ENCODE measurements at regions of chr12 and their contacts with region 1.

Region 1: DNA sequence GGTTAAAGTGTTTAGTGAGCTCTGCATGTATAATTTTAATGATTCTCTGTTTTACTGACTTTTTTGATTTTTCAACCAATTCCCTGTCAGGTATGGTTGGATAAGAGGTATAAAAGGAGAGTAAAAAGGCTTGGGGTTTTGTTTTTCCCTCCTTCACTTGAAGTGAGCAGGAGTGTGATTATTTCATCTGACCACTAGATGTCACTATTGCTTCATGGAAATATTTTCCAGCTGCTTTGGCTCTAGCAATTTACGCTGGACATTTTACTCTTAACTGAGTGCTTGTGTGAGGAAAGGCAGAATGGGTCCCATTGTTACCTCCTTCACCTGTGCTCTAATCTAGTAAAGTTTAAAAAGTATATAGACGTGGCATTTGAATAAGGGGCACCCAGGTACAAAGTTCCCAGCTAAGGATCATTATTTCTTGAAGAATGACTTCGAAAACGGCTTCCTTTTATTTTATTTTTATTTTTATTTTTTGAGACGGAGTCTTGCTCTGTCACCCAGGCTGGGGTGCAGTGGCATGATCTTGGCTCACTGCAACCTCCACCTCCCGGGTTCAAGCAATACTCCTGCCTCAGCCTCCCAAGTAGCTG is 66.5 kb downstream of the TBC1D30 start:
- DNase-seq: peak; percentile 71
- H3K4me3 Mint-ChIP-seq: no peak overlapping the region
- H3K27ac Mint-ChIP-seq: no peak overlapping the region
- H3K4me1 Mint-ChIP-seq: peaks cover 6% of the 10 kb centered on the region
- H3K27me3 Mint-ChIP-seq: peaks cover 15% of the 10 kb centered on the region
- CTCF ChIP-seq: peak; percentile 58

Region 2: GRCh38 chr12:64801381-64801780 is 89.6 kb before region 1 on chr12:
- CTCF ChIA-PET with region 1: interaction called, 37 read pairs
- POLR2A ChIA-PET with region 1: no interaction called
- intact Hi-C with region 1: loop called (anchors 1 kb)
- DNase-seq: peak; percentile 45
- H3K4me3 Mint-ChIP-seq: no peak overlapping the region
- H3K27ac Mint-ChIP-seq: no peak overlapping the region
- H3K4me1 Mint-ChIP-seq: peaks cover 13% of the 10 kb centered on the region
- H3K27me3 Mint-ChIP-seq: no peaks in the 10 kb centered on the region
- CTCF ChIP-seq: no peak

Region 3: DNA sequence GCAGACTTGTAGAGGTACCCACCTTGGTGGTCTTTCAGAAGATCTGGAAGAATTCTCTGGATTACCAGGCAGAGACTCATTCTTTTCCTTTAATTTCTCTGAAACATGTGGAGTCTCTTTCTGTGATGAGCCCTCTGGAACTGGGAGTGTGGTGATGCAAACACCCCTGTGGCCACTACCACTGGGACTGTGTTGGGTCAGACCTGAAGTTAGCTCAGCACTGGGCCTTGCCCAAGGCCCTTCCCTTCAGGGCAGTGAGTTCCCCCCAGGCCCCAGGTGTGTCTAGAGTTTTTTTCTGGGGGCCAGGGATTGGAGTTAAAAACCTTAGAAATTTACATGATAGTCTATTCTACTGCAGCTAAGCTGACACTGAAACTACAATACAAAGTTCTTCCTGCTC is 34.5 kb before region 1 on chr12:
- CTCF ChIA-PET with region 1: no interaction called
- POLR2A ChIA-PET with region 1: no interaction called
- intact Hi-C with region 1: no loop called
- DNase-seq: no peak
- H3K4me3 Mint-ChIP-seq: no peak overlapping the region
- H3K27ac Mint-ChIP-seq: no peak overlapping the region
- H3K4me1 Mint-ChIP-seq: no peaks in the 10 kb centered on the region
- H3K27me3 Mint-ChIP-seq: no peaks in the 10 kb centered on the region
- CTCF ChIP-seq: no peak

Region 4: DNA sequence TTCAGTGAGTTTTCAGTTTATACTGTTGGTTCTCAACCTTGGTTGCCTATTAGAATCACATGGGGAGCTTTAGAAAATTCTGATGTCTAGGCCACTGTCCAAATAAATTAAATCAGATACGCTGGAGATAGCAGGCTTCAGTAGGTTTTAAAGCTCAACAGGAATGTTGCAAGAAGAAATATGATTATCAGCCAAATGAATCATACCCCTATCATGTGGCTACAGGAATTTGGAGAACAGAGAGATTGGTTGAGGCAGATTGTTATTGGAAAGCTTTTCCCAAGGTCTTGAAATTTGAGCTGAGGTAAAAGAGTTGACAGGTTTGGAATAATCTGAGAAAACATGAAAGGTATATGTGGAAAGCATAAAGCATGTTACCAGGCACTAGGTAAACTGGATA is 104.9 kb after region 1 on chr12:
- CTCF ChIA-PET with region 1: interaction called, 10 read pairs
- POLR2A ChIA-PET with region 1: no interaction called
- intact Hi-C with region 1: no loop called
- DNase-seq: peak; percentile 53
- H3K4me3 Mint-ChIP-seq: no peak overlapping the region
- H3K27ac Mint-ChIP-seq: no peak overlapping the region
- H3K4me1 Mint-ChIP-seq: peaks cover 7% of the 10 kb centered on the region
- H3K27me3 Mint-ChIP-seq: peaks cover 10% of the 10 kb centered on the region
- CTCF ChIP-seq: no peak

Region 5: GRCh38 chr12:65106948-65107347 is 216.0 kb after region 1 on chr12:
- CTCF ChIA-PET with region 1: interaction called, 131 read pairs
- POLR2A ChIA-PET with region 1: interaction called, 3 read pairs
- intact Hi-C with region 1: loop called (anchors 1 kb)
- DNase-seq: peak; percentile 9
- H3K4me3 Mint-ChIP-seq: no peak overlapping the region
- H3K27ac Mint-ChIP-seq: no peak overlapping the region
- H3K4me1 Mint-ChIP-seq: no peaks in the 10 kb centered on the region
- H3K27me3 Mint-ChIP-seq: peaks cover 20% of the 10 kb centered on the region
- CTCF ChIP-seq: no peak

Region 6: DNA sequence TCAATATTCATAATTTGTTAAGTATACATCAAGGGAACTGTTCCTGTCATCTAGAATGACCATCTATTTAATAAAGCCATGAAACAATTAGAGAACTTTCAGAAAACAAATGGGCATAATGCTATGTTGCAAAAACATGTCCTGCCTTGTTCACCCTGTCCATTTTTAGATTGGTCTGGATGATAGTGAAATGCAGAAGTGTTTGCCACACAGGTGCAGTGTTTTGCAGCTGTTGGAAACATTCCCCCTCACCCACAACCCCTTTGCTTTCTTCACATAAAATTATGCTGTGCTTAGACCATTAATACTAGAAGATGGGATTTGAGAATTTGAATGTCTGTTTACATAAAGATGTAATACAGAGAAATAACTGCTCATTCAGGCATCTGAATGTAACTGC is 314.9 kb after region 1 on chr12:
- CTCF ChIA-PET with region 1: no interaction called
- POLR2A ChIA-PET with region 1: no interaction called
- intact Hi-C with region 1: no loop called
- DNase-seq: no peak
- H3K4me3 Mint-ChIP-seq: no peak overlapping the region
- H3K27ac Mint-ChIP-seq: no peak overlapping the region
- H3K4me1 Mint-ChIP-seq: peaks cover 5% of the 10 kb centered on the region
- H3K27me3 Mint-ChIP-seq: no peaks in the 10 kb centered on the region
- CTCF ChIP-seq: no peak

Region 7: DNA sequence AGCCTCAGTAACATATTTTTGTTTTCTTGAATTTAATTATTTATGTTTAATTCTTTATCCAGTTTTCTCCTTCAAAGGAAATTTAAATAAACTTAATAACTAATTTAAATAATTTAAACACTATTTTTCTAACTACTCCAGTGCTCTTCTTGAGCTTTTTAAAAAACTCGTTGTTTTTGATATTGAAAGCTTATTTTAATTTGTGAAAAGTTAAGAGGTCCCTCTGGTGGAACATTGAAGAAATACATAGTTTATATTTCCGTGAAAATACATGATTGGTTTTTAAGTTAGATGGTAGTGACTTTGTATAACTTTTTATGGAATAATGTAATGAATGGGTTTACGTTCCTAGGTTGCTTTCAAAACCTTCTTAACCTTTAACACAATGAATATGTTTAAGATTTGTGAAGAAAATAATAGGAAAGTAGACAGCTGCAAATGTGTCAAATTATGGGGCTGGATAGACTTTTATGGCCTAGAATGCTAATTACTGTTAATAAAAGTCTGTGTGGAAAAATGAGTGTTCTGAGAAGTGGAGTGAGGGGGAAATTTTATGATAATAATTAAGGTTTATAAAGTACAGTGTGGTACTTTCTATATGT is 341.6 kb after region 1 on chr12:
- CTCF ChIA-PET with region 1: interaction called, 71 read pairs
- POLR2A ChIA-PET with region 1: interaction called, 4 read pairs
- intact Hi-C with region 1: loop called (anchors 1 kb)
- DNase-seq: peak; percentile 28
- H3K4me3 Mint-ChIP-seq: no peak overlapping the region
- H3K27ac Mint-ChIP-seq: peak overlapping the region; percentile 29
- H3K4me1 Mint-ChIP-seq: peaks cover 17% of the 10 kb centered on the region
- H3K27me3 Mint-ChIP-seq: no peaks in the 10 kb centered on the region
- CTCF ChIP-seq: peak; percentile 29

Region 8: GRCh38 chr12:66107451-66107915 is 1216.5 kb after region 1 on chr12:
- CTCF ChIA-PET with region 1: interaction called, 3 read pairs
- POLR2A ChIA-PET with region 1: no interaction called
- intact Hi-C with region 1: loop called (anchors 10 kb)
- DNase-seq: peak; percentile 98
- H3K4me3 Mint-ChIP-seq: no peak overlapping the region
- H3K27ac Mint-ChIP-seq: no peak overlapping the region
- H3K4me1 Mint-ChIP-seq: peaks cover 16% of the 10 kb centered on the region
- H3K27me3 Mint-ChIP-seq: no peaks in the 10 kb centered on the region
- CTCF ChIP-seq: peak; percentile 62